Mammary epithelial cell (primary cell): ENCODE measurements at regions of chr20 and their contacts with region 1.

Region 1: GRCh38 chr20:32357869-32358631 is at the start of gene ASXL1:
- DNase-seq: peak; percentile 91
- H3K4me3 ChIP-seq: peak within 1 kb of the TSS; percentile 61 to 70 (median 64)
- H3K27ac ChIP-seq: peak within 1 kb of the TSS; percentile 76
- H3K4me1 ChIP-seq: peaks cover 38% of the 10 kb centered on the region
- H3K27me3 ChIP-seq: no peaks in the 10 kb centered on the region
- CTCF ChIP-seq: no peak
- total RNA-seq, gene ASXL1: 37.2 to 60.1 TPM

Region 2: DNA sequence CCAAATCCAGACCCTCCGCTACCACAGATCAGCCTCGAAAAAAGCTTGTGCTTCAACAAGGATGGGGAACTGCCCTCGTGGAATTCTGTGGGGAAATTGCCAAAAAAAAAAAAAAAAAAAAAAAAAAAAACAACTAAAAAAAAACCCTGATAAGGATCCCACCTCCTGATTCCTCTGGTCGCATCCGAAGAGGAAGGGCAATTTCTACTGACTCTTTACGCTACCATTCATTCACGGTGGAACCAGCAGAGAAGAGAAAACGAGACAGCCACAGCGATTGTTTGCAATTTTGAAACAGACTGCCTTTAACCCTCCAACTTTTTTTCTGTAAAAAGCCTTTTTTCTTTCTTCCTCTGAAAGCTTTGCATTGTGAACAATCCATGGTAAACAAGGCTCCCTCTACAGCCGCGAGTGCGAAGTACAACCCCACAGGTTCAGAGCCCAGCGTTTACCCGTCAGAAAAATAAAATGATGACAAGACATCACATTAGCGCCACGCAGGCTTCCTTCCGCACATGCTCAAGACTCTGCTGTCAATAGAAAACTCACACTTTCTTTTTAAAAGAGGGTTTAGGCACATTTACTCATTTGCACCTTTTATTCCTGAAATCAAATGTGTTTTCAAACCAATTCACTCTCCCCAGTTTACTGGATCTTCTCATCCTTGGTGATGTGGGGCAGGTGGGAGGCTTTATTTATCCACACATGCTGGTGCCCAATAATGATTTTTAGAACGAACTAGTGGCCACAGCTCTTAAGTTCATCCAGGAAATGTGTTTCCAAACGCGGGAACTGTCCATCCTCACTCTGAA is 127.1 kb after region 1 on chr20:
- CTCF ChIA-PET with region 1: no interaction called
- dilution Hi-C with region 1: no loop called
- in situ Hi-C with region 1: no loop called
- intact Hi-C with region 1: loop called (anchors 2 kb)
- DNase-seq: peak; percentile 60
- H3K4me3 ChIP-seq: peak overlapping the region; percentile 51 to 63 (median 52)
- H3K27ac ChIP-seq: no peak overlapping the region
- H3K4me1 ChIP-seq: peaks cover 14% of the 10 kb centered on the region
- H3K27me3 ChIP-seq: no peaks in the 10 kb centered on the region
- CTCF ChIP-seq: peak; percentile 64 to 77

Region 3: GRCh38 chr20:32521780-32522525 is 163.9 kb after region 1 on chr20:
- CTCF ChIA-PET with region 1: no interaction called
- dilution Hi-C with region 1: no loop called
- in situ Hi-C with region 1: no loop called
- intact Hi-C with region 1: no loop called
- DNase-seq: no peak
- H3K4me3 ChIP-seq: no peak overlapping the region
- H3K27ac ChIP-seq: no peak overlapping the region
- H3K4me1 ChIP-seq: peaks cover 9% of the 10 kb centered on the region
- H3K27me3 ChIP-seq: no peaks in the 10 kb centered on the region
- CTCF ChIP-seq: peak; percentile 78 to 87

Region 4: DNA sequence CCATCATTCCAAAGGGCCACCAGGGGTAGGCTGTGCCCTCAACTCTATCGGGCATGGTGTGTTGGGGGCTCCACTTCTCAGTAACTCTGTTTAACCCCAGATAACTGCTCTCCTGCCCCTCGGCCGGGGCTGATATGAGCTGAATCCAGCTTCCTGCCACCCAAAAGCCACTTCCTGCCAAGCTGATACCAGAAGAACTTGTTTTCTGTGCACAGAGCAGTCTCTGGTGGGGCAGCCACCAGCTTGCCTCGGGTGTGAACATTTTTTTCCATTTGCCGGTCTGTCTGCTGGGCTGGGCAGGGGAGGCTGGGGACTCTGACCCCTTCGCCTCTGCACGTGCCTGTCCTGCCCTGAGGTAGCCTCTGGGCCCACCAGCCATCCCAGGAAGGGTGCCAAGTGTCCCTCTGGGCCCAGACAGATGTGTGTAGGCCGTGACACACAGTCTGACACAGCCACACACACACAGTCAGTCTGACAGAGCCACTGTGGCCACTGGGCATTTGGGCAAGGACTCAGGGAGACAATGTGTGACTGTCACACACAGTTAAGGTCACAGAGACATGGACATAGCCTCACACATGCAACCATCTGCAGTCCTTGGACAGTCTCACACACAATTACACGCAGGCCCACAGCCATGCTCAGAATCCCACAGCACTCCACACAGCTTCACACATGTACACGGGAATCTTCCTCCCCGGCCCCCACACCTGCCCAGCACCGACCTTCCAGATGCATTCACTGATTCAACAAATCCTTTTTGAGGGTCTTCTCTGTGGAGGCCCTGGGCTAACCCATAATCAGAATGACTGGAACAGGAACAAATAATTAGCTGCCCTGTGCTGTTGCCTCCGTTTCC is 182.0 kb after region 1 on chr20:
- CTCF ChIA-PET with region 1: no interaction called
- dilution Hi-C with region 1: no loop called
- in situ Hi-C with region 1: no loop called
- intact Hi-C with region 1: no loop called
- DNase-seq: no peak
- H3K4me3 ChIP-seq: no peak overlapping the region
- H3K27ac ChIP-seq: no peak overlapping the region
- H3K4me1 ChIP-seq: peaks cover 11% of the 10 kb centered on the region
- H3K27me3 ChIP-seq: no peaks in the 10 kb centered on the region
- CTCF ChIP-seq: no peak